ENCODE measurements at regions of chr3 and their contacts with region 1.

Region 1: GRCh38 chr3:187745201-187746058 is at the start of gene BCL6:
- DNase-seq: peak; percentile 93
- ATAC-seq: peak; percentile 57
- H3K4me3 Mint-ChIP-seq: peak within 1 kb of the TSS; percentile 93
- H3K27ac Mint-ChIP-seq: peak within 1 kb of the TSS; percentile 98
- H3K4me1 Mint-ChIP-seq: peaks cover 56% of the 10 kb centered on the region
- H3K27me3 Mint-ChIP-seq: no peaks in the 10 kb centered on the region
- CTCF ChIP-seq: no peak
- total RNA-seq, gene BCL6: 13.7 to 14.0 TPM

Region 2: DNA sequence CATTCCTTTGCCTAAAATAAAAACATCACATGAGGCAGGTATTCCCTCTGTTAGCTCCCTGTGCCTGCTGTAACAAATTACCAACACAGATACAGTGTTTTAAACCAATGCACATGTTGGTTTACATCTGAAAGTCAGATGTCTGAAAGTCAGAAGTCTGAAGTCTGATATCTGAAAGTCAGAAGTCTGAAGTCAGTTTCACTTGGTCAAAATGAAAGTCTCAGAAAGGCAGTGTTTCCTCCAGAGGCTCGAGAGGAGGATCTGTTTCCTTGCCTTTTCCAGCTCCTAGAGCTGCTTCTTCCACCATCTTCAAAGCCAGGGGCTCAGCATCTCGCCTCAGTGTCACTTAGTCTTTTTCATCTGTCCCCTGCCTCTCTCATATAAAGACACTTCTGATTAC is 97.3 kb before region 1 on chr3:
- CTCF ChIA-PET with region 1: no interaction called
- POLR2A ChIA-PET with region 1: no interaction called
- intact Hi-C with region 1: no loop called
- DNase-seq: no peak
- ATAC-seq: no peak
- H3K4me3 Mint-ChIP-seq: no peak overlapping the region
- H3K27ac Mint-ChIP-seq: no peak overlapping the region
- H3K4me1 Mint-ChIP-seq: no peaks in the 10 kb centered on the region
- H3K27me3 Mint-ChIP-seq: peaks cover 26% of the 10 kb centered on the region
- CTCF ChIP-seq: no peak

Region 3: DNA sequence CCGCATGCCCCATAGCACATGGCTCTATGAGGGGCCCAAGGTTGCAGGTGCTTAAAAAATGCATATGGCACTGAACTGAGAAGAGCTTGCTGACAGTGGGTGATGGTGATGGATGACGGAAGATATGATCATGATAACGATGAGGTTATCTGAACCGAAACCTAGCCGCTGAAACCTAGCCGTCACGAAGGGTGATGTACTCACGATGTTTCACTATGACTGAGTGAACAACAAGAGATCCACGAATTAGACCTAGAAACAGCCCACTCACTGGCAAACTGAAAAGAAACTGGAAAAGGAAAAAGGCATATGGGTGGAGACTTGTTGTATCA is 57.5 kb after region 1 on chr3:
- CTCF ChIA-PET with region 1: interaction called, 79 read pairs
- POLR2A ChIA-PET with region 1: interaction called, 134 read pairs
- intact Hi-C with region 1: loop called (anchors 2 kb)
- DNase-seq: peak; percentile 86
- ATAC-seq: peak; percentile 48
- H3K4me3 Mint-ChIP-seq: peak overlapping the region; percentile 52
- H3K27ac Mint-ChIP-seq: peak overlapping the region; percentile 92
- H3K4me1 Mint-ChIP-seq: peaks cover 93% of the 10 kb centered on the region
- H3K27me3 Mint-ChIP-seq: no peaks in the 10 kb centered on the region
- CTCF ChIP-seq: no peak

Region 4: DNA sequence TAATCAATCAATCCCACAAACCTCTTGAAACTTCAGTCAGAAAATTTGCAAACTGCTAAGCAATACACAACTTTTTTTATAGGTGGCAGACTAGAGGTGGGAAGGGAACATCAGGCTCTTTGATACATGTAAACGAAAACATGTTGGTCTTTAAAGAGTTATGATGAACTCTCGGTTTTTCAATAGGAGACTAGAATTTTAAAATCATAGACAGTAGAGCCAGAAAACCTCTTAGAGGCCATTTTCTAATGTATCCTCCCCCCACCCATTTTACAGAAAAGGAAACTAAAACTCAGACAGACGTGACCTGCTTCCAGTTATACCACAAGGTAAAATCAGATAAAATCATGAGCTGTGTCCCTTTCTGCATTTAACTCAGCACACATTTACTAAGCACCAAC is 229.4 kb after region 1 on chr3:
- CTCF ChIA-PET with region 1: interaction called, 12 read pairs
- POLR2A ChIA-PET with region 1: interaction called, 26 read pairs
- intact Hi-C with region 1: loop called (anchors 2 kb)
- DNase-seq: no peak
- ATAC-seq: peak; percentile 48
- H3K4me3 Mint-ChIP-seq: peak overlapping the region; percentile 30
- H3K27ac Mint-ChIP-seq: peak overlapping the region; percentile 86
- H3K4me1 Mint-ChIP-seq: peaks cover 52% of the 10 kb centered on the region
- H3K27me3 Mint-ChIP-seq: no peaks in the 10 kb centered on the region
- CTCF ChIP-seq: no peak

Region 5: GRCh38 chr3:188257384-188258026 is 512.1 kb after region 1 on chr3:
- CTCF ChIA-PET with region 1: interaction called, 11 read pairs
- POLR2A ChIA-PET with region 1: interaction called, 5 read pairs
- intact Hi-C with region 1: loop called (anchors 10 kb)
- DNase-seq: no peak
- ATAC-seq: no peak
- H3K4me3 Mint-ChIP-seq: no peak overlapping the region
- H3K27ac Mint-ChIP-seq: no peak overlapping the region
- H3K4me1 Mint-ChIP-seq: peaks cover 39% of the 10 kb centered on the region
- H3K27me3 Mint-ChIP-seq: no peaks in the 10 kb centered on the region
- CTCF ChIP-seq: no peak

Region 6: DNA sequence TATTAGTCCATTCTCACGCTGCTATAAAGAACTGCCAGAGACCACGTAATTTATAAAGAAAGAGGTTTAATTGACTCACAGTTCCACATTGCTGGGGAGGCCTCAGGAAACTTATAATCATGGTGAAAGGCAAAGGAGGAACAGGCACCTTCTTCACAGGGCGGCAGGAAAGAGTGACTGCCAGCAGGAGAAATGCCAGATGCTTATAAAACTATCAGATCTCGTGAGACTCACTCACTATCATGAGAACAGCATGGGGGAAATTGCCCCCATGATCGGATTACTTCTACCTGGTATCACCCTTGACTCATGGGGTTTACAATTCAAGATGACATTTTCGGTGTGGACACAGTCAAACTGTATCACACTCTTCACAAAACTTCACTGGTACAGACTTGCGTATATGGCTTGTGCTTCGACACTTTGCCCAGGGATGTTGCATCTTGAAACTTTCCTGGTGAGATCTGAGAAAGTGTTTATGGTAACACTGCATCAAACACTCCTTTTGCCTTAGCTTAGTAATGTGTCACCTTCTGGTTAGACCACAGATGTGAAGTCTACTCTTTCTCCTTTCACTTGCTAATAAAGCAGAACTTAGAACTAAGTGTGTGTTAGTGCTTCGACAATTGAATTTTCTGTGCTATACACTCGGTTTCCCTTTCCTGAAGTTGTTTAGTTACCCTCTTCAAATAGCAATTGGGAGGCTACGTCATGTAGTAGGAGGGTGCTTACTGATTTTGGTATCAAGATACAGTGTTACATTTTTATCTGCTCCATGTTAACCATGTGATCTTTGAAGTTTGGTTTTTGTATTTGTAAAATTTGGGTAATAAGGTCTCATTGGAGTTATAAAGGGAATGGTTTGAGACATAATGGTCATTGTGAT is 594.2 kb after region 1 on chr3:
- CTCF ChIA-PET with region 1: interaction called, 14 read pairs
- POLR2A ChIA-PET with region 1: interaction called, 7 read pairs
- intact Hi-C with region 1: loop called (anchors 10 kb)
- DNase-seq: peak; percentile 74
- ATAC-seq: peak; percentile 88
- H3K4me3 Mint-ChIP-seq: peak overlapping the region; percentile 68
- H3K27ac Mint-ChIP-seq: peak overlapping the region; percentile 95
- H3K4me1 Mint-ChIP-seq: peaks cover 42% of the 10 kb centered on the region
- H3K27me3 Mint-ChIP-seq: no peaks in the 10 kb centered on the region
- CTCF ChIP-seq: no peak

Region 7: DNA sequence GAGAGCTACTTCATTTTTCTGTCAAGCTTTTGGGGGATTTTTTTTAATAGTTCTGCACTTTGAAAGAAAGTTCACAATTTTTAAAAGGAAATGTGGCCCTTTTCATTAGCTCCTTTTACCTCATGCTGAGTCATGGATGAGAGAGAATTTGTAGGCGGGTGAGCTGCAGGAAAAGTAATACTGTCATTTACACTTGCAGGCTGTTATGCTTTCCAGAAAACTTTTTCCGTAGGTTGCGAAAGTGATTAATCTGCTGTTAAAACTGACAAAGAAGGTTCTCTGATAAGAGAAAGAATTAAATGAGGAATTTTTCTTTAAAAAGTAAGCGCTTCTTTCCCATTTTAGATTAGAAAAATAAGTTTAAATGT is 838.7 kb after region 1 on chr3:
- CTCF ChIA-PET with region 1: interaction called, 8 read pairs
- POLR2A ChIA-PET with region 1: no interaction called
- intact Hi-C with region 1: loop called (anchors 10 kb)
- DNase-seq: no peak
- ATAC-seq: peak; percentile 69
- H3K4me3 Mint-ChIP-seq: no peak overlapping the region
- H3K27ac Mint-ChIP-seq: no peak overlapping the region
- H3K4me1 Mint-ChIP-seq: peaks cover 25% of the 10 kb centered on the region
- H3K27me3 Mint-ChIP-seq: no peaks in the 10 kb centered on the region
- CTCF ChIP-seq: no peak

Measured in activated CD8-positive, alpha-beta T cell treated with anti-CD3 and anti-CD28 coated beads for 36 hours (primary cell).